Activated T-helper 1 cell treated with anti-CD3 and anti-CD28 coated beads, Interleukin-12 subunit alpha, Interleukin-12 subunit beta, Interleukin-2, Interleukin-4 antibody, amounts not matched to agents 30 ng/mL and 10 ng/mL and 1 ng/mL, durations not matched to agents 14 hours and 24 hours and 36 hours (primary cell): ENCODE measurements at regions of chr2 and their contacts with region 1.

Region 1: DNA sequence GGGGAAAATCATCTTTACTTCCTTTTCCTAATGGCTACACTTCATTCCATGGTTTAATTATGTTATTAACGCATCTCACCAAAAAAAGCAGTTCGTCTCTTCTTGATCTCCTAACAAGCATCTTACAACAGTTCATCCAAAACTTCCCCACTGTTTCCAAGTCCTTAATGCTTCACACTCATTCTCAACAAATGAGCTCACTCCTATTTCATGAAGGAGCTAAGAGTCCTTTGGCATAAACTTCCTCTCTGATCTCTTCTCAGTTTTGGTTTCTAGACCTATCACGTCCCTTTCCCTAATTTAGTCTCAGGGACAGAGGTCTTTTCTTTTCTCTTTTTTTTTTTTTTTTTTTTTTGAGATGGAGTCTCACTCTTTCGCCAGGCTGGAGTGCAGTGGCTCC is 205.9 kb upstream of the SLC39A10 start:
- DNase-seq: no peak
- H3K4me3 Mint-ChIP-seq: no peak overlapping the region
- H3K27ac Mint-ChIP-seq: no peak overlapping the region
- H3K4me1 Mint-ChIP-seq: peaks cover 26% of the 10 kb centered on the region
- H3K27me3 Mint-ChIP-seq: no peaks in the 10 kb centered on the region

Region 2: DNA sequence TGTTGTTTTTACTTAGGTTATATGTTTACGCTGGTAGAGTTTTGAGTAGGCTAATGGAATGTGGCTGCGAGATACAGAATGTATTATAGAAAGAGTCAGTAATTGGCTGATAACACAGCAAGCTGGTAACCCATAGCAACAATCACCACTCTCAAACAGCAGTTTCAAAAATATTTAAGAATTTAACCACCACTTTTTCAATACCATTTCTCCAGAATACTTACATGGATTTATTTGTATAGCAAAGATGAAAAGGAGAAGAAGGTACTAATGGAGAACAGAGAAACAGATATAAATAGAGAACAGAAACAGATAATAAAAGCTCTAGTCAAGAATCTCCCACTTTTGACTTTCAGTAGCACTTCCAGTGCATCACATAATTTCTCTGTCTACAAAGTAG is 17.6 kb after region 1 on chr2:
- intact Hi-C with region 1: loop called (anchors 2 kb)
- DNase-seq: no peak
- H3K4me3 Mint-ChIP-seq: no peak overlapping the region
- H3K27ac Mint-ChIP-seq: no peak overlapping the region
- H3K4me1 Mint-ChIP-seq: peaks cover 21% of the 10 kb centered on the region
- H3K27me3 Mint-ChIP-seq: no peaks in the 10 kb centered on the region

Region 3: GRCh38 chr2:195486987-195487644 is 36.0 kb after region 1 on chr2:
- intact Hi-C with region 1: loop called (anchors 1 kb)
- DNase-seq: peak; percentile 26
- H3K4me3 Mint-ChIP-seq: peak overlapping the region; percentile 32
- H3K27ac Mint-ChIP-seq: peak overlapping the region; percentile 61
- H3K4me1 Mint-ChIP-seq: peaks cover 56% of the 10 kb centered on the region
- H3K27me3 Mint-ChIP-seq: no peaks in the 10 kb centered on the region